ENCODE measurements at regions of chr12 and their contacts with region 1.

Region 1: DNA sequence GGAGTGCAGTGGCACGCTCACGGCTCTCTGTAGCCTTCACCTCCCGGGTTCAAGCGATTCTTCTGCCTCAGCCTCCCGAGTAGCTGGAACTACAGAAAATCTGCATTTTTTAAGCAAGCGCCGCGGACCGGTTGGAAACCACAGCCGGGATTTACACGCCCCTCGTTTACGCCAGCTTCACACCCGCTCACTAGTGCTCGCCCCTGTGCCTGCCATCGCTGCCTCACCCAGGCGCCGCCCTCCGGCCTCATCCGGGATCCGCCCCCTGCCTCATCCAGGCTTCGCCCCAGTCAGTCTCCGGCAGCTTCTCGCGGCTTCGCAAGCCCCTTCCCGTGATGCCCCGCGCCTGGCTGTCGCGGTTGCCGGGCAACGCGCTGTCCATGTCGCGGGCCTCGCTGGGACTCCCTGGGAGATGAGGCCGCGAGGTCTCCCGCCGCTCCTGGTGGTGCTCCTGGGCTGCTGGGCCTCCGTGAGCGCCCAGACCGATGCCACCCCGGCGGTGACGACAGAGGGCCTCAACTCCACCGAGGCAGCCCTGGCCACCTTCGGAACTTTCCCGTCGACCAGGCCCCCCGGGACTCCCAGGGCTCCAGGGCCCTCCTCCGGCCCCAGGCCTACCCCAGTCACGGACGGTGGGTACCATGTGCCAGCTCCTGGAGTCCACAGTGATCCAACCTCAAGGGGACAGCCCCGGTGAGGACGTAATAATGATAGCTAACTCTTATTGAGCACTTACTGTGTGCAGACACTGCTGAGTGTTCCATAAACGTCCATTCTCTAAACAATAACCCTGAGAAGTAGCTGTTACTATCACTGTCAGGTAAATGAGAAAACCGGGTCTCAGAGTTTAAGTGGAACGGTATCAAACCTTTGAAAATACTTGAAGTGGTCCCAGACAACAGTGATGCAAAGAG is at the start of gene TCTN1:
- DNase-seq: peak; percentile 93 to 96 (median 94)
- H3K4me3 ChIP-seq: peak within 1 kb of the TSS; percentile 53 to 86
- H3K4me3 Mint-ChIP-seq: peak within 1 kb of the TSS; percentile 86 to 90 (median 88)
- H3K27ac ChIP-seq: peak within 1 kb of the TSS; percentile 72
- H3K27ac Mint-ChIP-seq: peak within 1 kb of the TSS; percentile 65 to 94 (median 88)
- H3K4me1 ChIP-seq: peaks cover 8% of the 10 kb centered on the region
- H3K4me1 Mint-ChIP-seq: peaks cover 4 to 9% (median 6%) of the 10 kb centered on the region in 4 donors
- H3K27me3 ChIP-seq: no peaks in the 10 kb centered on the region
- H3K27me3 Mint-ChIP-seq: no peaks in the 10 kb centered on the region
- total RNA-seq, gene TCTN1: 5.8 to 7.7 TPM

Region 2: DNA sequence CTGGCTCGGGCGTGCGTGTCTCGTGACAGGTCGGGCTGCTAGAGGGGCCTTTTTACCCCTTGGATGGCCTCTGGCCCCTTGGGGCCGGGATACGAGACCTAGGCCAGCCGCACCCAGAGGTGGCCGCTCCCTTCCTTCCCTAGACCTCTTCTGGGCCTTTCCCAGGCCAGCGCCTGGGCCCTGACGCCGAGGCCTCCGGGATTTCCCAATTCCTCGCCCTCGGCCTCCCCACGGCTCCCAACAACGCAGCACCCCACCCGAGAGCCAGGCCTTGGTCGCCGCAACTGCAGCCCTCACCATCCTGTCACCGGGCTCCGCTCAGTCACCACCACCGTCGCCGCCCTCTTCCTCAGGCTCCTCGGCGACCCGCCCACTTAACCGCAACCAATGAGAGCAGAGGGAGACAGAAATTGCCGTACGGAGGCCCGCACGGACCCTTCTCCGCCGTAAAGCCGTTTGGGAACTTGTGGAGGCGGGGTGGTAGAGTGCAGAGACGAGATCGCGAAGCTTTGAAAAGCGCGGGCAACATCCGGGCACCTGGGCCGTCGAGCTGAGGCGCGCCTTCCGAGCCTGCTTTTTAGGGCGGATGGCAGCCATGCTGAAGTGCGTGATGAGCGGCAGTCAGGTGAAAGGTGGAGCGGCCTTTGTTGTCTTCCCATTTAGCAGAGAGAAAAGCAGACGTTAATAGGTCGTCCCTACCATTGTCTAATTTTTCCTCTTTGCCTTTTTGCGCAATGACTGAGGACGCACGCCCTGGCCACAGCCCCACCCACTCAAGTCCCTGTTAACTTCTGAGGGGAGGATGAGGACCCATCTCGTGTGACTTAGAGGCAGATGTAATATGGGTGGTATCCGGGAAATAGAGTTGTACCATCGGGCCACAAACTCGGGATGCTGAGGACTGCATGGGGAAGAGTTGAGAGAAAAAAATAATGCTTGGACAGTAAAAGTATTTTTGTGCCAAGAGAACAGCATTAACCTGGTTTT is 112.0 kb before region 1 on chr12 and contains the starts of genes RAD9B and VPS29:
- CTCF ChIA-PET with region 1: interaction called, 3 read pairs
- POLR2A ChIA-PET with region 1: interaction called, 10 read pairs
- intact Hi-C with region 1: loop called (anchors 5 kb)
- DNase-seq: peak; percentile 99 to 100 (median 99)
- H3K4me3 ChIP-seq: peak within 1 kb of the TSS; percentile 85 to 91
- H3K4me3 Mint-ChIP-seq: peak within 1 kb of the TSS; percentile 96 to 99 (median 98)
- H3K27ac ChIP-seq: peak within 1 kb of the TSS; percentile 94
- H3K27ac Mint-ChIP-seq: peak within 1 kb of the TSS; percentile 95 to 99 (median 97)
- H3K4me1 ChIP-seq: peaks cover 35% of the 10 kb centered on the region
- H3K4me1 Mint-ChIP-seq: peaks cover 20 to 44% (median 30%) of the 10 kb centered on the region in 4 donors
- H3K27me3 ChIP-seq: no peaks in the 10 kb centered on the region
- H3K27me3 Mint-ChIP-seq: no peaks in the 10 kb centered on the region
- total RNA-seq, gene RAD9B: 1.1 to 2.1 TPM
- total RNA-seq, gene VPS29: 117 to 121 TPM

Region 3: GRCh38 chr12:110583137-110584059 is 30.6 kb before region 1 on chr12 and contains the start of gene PPTC7:
- CTCF ChIA-PET with region 1: interaction called, 4 read pairs
- POLR2A ChIA-PET with region 1: interaction called, 5 read pairs
- intact Hi-C with region 1: loop called (anchors 1 kb)
- DNase-seq: peak; percentile 91 to 97 (median 94)
- H3K4me3 ChIP-seq: peak within 1 kb of the TSS; percentile 77 to 84
- H3K4me3 Mint-ChIP-seq: peak within 1 kb of the TSS; percentile 89 to 98 (median 96)
- H3K27ac ChIP-seq: peak within 1 kb of the TSS; percentile 93
- H3K27ac Mint-ChIP-seq: peak within 1 kb of the TSS; percentile 94 to 97 (median 96)
- H3K4me1 ChIP-seq: peaks cover 62% of the 10 kb centered on the region
- H3K4me1 Mint-ChIP-seq: peaks cover 47 to 73% (median 61%) of the 10 kb centered on the region in 4 donors
- H3K27me3 ChIP-seq: no peaks in the 10 kb centered on the region
- H3K27me3 Mint-ChIP-seq: no peaks in the 10 kb centered on the region
- total RNA-seq, gene PPTC7: 32.6 to 35.6 TPM

Region 4: GRCh38 chr12:110627500-110628195 is 13.6 kb after region 1 on chr12:
- CTCF ChIA-PET with region 1: no interaction called
- POLR2A ChIA-PET with region 1: no interaction called
- intact Hi-C with region 1: no loop called
- DNase-seq: no peak
- H3K4me3 ChIP-seq: no peak overlapping the region
- H3K4me3 Mint-ChIP-seq: peak overlapping the region in 6 of 8 donors; percentile 17 to 63 (median 41)
- H3K27ac ChIP-seq: no peak overlapping the region
- H3K27ac Mint-ChIP-seq: peak overlapping the region in 6 of 7 donors; percentile 52 to 86 (median 80)
- H3K4me1 ChIP-seq: peaks cover 11% of the 10 kb centered on the region
- H3K4me1 Mint-ChIP-seq: peaks cover 5 to 11% (median 7%) of the 10 kb centered on the region in 4 donors
- H3K27me3 ChIP-seq: no peaks in the 10 kb centered on the region
- H3K27me3 Mint-ChIP-seq: no peaks in the 10 kb centered on the region

Region 5: GRCh38 chr12:110689281-110690126 is 75.5 kb after region 1 on chr12:
- CTCF ChIA-PET with region 1: no interaction called
- POLR2A ChIA-PET with region 1: interaction called, 15 read pairs
- intact Hi-C with region 1: no loop called
- DNase-seq: peak; percentile 43 to 62 (median 51)
- H3K4me3 ChIP-seq: peak overlapping the region; percentile 36 to 70
- H3K4me3 Mint-ChIP-seq: peak overlapping the region; percentile 84 to 97 (median 90)
- H3K27ac ChIP-seq: peak overlapping the region; percentile 63
- H3K27ac Mint-ChIP-seq: peak overlapping the region; percentile 70 to 95 (median 87)
- H3K4me1 ChIP-seq: peaks cover 24% of the 10 kb centered on the region
- H3K4me1 Mint-ChIP-seq: peaks cover 15 to 43% (median 26%) of the 10 kb centered on the region in 4 donors
- H3K27me3 ChIP-seq: no peaks in the 10 kb centered on the region
- H3K27me3 Mint-ChIP-seq: peaks cover 0 to 5% of the 10 kb centered on the region in 2 donors